ENCODE measurements at regions of chr9 and their contacts with region 1.

Region 1: GRCh38 chr9:74952281-74953151 is at the start of gene C9orf40:
- DNase-seq: peak; percentile 90
- ATAC-seq: peak; percentile 89
- H3K4me3 Mint-ChIP-seq: peak within 1 kb of the TSS; percentile 99
- H3K27ac Mint-ChIP-seq: peak within 1 kb of the TSS; percentile 95
- H3K4me1 Mint-ChIP-seq: peaks cover 28% of the 10 kb centered on the region
- H3K27me3 Mint-ChIP-seq: no peaks in the 10 kb centered on the region
- CTCF ChIP-seq: peak; percentile 37
- total RNA-seq, gene C9orf40: 4.6 and 5.7 TPM in 2 replicates

Region 2: DNA sequence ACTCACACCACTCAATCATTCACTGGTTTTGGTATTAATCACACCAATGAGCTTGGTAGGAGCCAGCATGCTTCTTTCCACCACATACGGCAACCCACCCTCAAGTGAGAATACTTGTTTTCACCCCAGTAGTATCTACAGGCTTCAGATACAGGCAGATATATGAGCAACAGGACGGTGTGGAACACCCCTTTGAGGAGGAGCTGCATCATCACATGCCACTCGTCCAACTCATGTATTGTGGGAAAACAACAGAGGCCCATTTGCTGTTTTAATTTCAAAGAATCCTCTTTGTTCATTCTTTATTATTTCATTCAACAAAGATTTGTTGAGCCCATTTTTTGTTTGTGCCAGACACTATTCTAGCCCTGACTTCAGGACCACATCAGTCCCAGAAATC is 409.4 kb before region 1 on chr9:
- CTCF ChIA-PET with region 1: no interaction called
- POLR2A ChIA-PET with region 1: no interaction called
- intact Hi-C with region 1: no loop called
- DNase-seq: no peak
- ATAC-seq: no peak
- H3K4me3 Mint-ChIP-seq: no peak overlapping the region
- H3K27ac Mint-ChIP-seq: no peak overlapping the region
- H3K4me1 Mint-ChIP-seq: no peaks in the 10 kb centered on the region
- H3K27me3 Mint-ChIP-seq: no peaks in the 10 kb centered on the region
- CTCF ChIP-seq: no peak

Region 3: GRCh38 chr9:74865177-74865576 is 87.3 kb before region 1 on chr9:
- CTCF ChIA-PET with region 1: no interaction called
- POLR2A ChIA-PET with region 1: interaction called, 3 read pairs
- intact Hi-C with region 1: loop called (anchors 1 kb)
- DNase-seq: no peak
- ATAC-seq: peak; percentile 89
- H3K4me3 Mint-ChIP-seq: peak overlapping the region; percentile 33
- H3K27ac Mint-ChIP-seq: peak overlapping the region; percentile 38
- H3K4me1 Mint-ChIP-seq: peaks cover 22% of the 10 kb centered on the region
- H3K27me3 Mint-ChIP-seq: peaks cover 4% of the 10 kb centered on the region
- CTCF ChIP-seq: no peak

Region 4: DNA sequence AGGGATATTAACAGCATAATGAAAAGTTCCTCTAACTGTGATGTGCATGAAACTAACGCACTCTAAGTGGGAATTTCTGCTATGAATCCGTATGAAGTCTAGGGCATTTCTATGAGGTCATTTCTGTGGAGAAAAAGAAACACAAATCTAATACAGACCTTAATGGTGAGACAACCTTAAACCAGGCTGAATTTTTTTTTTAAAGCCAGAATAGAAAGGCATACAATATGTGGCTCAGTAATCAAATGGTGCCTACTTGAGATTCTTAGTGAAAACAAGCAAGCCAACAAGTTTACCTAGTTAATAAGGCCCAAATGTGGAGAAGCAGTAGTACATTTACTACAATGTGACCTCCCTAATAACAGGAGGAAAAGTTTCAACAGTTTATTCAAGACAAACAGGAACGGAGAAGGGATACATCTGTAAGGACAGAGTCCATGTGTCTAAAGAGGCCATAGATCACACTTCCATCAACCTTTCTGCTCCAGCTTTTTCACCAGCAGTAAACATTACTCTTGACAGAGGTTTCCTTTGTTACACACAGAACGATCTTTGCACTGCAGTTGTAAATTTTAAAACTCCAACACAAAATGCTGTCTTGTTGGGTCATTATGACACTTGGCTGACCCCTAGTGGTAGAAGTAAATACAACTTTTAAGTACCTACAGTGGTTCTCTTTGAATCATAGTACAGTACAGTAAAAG is 49.4 kb after region 1 on chr9:
- CTCF ChIA-PET with region 1: interaction called, 4 read pairs
- POLR2A ChIA-PET with region 1: no interaction called
- intact Hi-C with region 1: loop called (anchors 1 kb)
- DNase-seq: no peak
- ATAC-seq: peak; percentile 85
- H3K4me3 Mint-ChIP-seq: no peak overlapping the region
- H3K27ac Mint-ChIP-seq: no peak overlapping the region
- H3K4me1 Mint-ChIP-seq: peaks cover 9% of the 10 kb centered on the region
- H3K27me3 Mint-ChIP-seq: no peaks in the 10 kb centered on the region
- CTCF ChIP-seq: peak; percentile 40

Region 5: GRCh38 chr9:75088260-75088905 is 135.9 kb after region 1 on chr9 and contains the start of gene OSTF1:
- CTCF ChIA-PET with region 1: interaction called, 9 read pairs
- POLR2A ChIA-PET with region 1: interaction called, 28 read pairs
- intact Hi-C with region 1: loop called (anchors 1 kb)
- DNase-seq: peak; percentile 93
- ATAC-seq: peak; percentile 87
- H3K4me3 Mint-ChIP-seq: peak within 1 kb of the TSS; percentile 96
- H3K27ac Mint-ChIP-seq: peak within 1 kb of the TSS; percentile 88
- H3K4me1 Mint-ChIP-seq: peaks cover 51% of the 10 kb centered on the region
- H3K27me3 Mint-ChIP-seq: no peaks in the 10 kb centered on the region
- CTCF ChIP-seq: no peak
- total RNA-seq, gene OSTF1: 59.7 and 60.1 TPM in 2 replicates

Region 6: GRCh38 chr9:75333624-75334023 is 381.1 kb after region 1 on chr9:
- CTCF ChIA-PET with region 1: no interaction called
- POLR2A ChIA-PET with region 1: no interaction called
- intact Hi-C with region 1: no loop called
- DNase-seq: no peak
- ATAC-seq: no peak
- H3K4me3 Mint-ChIP-seq: no peak overlapping the region
- H3K27ac Mint-ChIP-seq: no peak overlapping the region
- H3K4me1 Mint-ChIP-seq: no peaks in the 10 kb centered on the region
- H3K27me3 Mint-ChIP-seq: no peaks in the 10 kb centered on the region
- CTCF ChIP-seq: no peak

Region 7: GRCh38 chr9:76756268-76756640 is 1803.7 kb after region 1 on chr9:
- CTCF ChIA-PET with region 1: no interaction called
- POLR2A ChIA-PET with region 1: no interaction called
- intact Hi-C with region 1: loop called (anchors 10 kb)
- DNase-seq: no peak
- ATAC-seq: no peak
- H3K4me3 Mint-ChIP-seq: peak overlapping the region; percentile 83
- H3K27ac Mint-ChIP-seq: peak overlapping the region; percentile 78
- H3K4me1 Mint-ChIP-seq: peaks cover 61% of the 10 kb centered on the region
- H3K27me3 Mint-ChIP-seq: no peaks in the 10 kb centered on the region
- CTCF ChIP-seq: no peak